CD8-positive, alpha-beta T cell (primary cell): ENCODE measurements at regions of chr14 and their contacts with region 1.

Region 1: DNA sequence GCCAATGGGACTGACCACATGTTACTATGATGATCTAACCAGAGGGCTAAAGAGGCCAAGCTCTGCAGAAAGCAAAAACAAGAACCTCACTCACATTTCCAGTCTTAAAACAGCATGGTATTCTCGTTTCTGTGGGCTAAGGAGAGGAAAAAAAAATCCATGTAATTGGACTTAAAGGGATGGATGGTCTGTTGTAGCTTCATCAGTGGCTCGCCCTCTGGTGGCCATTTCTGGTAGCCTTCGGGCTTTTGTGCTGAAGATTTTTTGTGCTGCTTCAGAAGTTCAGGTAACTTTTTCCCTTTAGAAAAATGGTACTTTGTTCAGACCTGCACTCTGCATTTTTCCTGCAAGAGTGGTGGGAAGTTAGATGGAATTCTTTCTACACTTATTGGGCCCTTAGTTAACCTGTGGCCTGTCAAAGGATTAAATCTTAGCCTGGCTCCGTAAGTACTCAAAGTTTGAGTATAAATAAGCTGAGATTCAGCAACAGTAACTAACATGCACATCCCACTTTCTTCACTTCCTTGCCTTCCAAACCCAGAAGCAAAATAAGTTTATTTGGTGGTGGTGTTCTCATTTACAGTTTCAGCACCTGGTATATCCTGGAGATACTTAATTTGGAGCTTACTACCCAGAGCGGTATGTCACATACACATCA is 22.3 kb downstream of the DCAF4 start:
- DNase-seq: peak; percentile 39 to 73 (median 60)
- ATAC-seq: peak; percentile 29
- H3K4me3 ChIP-seq: no peak overlapping the region
- H3K4me3 Mint-ChIP-seq: no peak overlapping the region
- H3K27ac ChIP-seq: no peak overlapping the region
- H3K27ac Mint-ChIP-seq: no peak overlapping the region
- H3K4me1 ChIP-seq: no peaks in the 10 kb centered on the region
- H3K4me1 Mint-ChIP-seq: no peaks in the 10 kb centered on the region
- H3K27me3 ChIP-seq: no peaks in the 10 kb centered on the region
- H3K27me3 Mint-ChIP-seq: no peaks in the 10 kb centered on the region
- CTCF ChIP-seq: peak; percentile 86

Region 2: DNA sequence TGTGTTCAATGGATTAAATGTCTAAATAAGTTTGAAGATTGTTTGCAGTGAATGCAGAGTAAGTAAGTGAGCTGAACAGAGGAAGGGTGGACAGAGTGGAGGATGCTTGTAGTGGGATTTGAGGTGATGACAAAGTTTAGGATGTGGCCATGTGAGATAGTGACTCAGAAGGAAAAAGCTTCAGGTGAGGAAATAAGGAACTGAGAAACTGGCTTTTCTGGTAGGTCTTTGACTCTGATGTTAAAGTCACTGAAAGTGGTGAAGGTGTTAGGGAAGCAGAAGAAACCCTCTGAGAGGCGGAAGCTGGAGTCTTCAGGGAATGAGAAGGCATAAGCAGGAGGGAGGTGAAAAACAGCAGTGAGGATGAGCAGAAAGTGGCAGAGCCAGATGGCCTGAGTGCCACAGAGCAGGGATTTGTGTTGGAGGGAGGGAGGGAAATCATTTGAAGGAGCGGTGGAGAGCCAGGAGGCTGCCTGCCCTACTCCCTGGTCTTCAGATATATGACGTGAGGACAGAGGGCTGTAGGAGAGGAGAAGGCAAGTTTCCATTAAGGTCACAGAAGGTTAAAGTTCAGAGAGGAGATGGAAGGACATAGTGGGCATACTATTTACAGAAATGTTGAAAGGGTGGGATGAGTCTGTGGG is 991.6 kb before region 1 on chr14:
- CTCF ChIA-PET with region 1: no interaction called
- POLR2A ChIA-PET with region 1: no interaction called
- intact Hi-C with region 1: no loop called
- DNase-seq: no peak
- ATAC-seq: no peak
- H3K4me3 ChIP-seq: no peak overlapping the region
- H3K4me3 Mint-ChIP-seq: no peak overlapping the region
- H3K27ac ChIP-seq: no peak overlapping the region
- H3K27ac Mint-ChIP-seq: no peak overlapping the region
- H3K4me1 ChIP-seq: no peaks in the 10 kb centered on the region
- H3K4me1 Mint-ChIP-seq: no peaks in the 10 kb centered on the region
- H3K27me3 ChIP-seq: no peaks in the 10 kb centered on the region
- H3K27me3 Mint-ChIP-seq: peaks cover 18% of the 10 kb centered on the region
- CTCF ChIP-seq: no peak

Region 3: GRCh38 chr14:72926292-72927028 is 22.1 kb before region 1 on chr14 and contains the start of gene DCAF4:
- CTCF ChIA-PET with region 1: interaction called, 6 read pairs
- POLR2A ChIA-PET with region 1: no interaction called
- intact Hi-C with region 1: loop called in 1 of 2 experiments (anchors 1 kb)
- DNase-seq: peak; percentile 89 to 97 (median 93)
- ATAC-seq: peak; percentile 93
- H3K4me3 ChIP-seq: peak within 1 kb of the TSS; percentile 79 to 87
- H3K4me3 Mint-ChIP-seq: peak within 1 kb of the TSS; percentile 94
- H3K27ac ChIP-seq: peak within 1 kb of the TSS; percentile 67 to 76
- H3K27ac Mint-ChIP-seq: peak within 1 kb of the TSS; percentile 92
- H3K4me1 ChIP-seq: peaks cover 13% of the 10 kb centered on the region
- H3K4me1 Mint-ChIP-seq: peaks cover 15% of the 10 kb centered on the region
- H3K27me3 ChIP-seq: no peaks in the 10 kb centered on the region
- H3K27me3 Mint-ChIP-seq: peaks cover 2% of the 10 kb centered on the region
- CTCF ChIP-seq: no peak
- total RNA-seq, gene DCAF4: 21.9 to 26.6 TPM

Region 4: GRCh38 chr14:72962829-72963312 is 14.3 kb after region 1 on chr14:
- CTCF ChIA-PET with region 1: interaction called, 51 read pairs
- POLR2A ChIA-PET with region 1: interaction called, 3 read pairs
- intact Hi-C with region 1: no loop called
- DNase-seq: no peak
- ATAC-seq: no peak
- H3K4me3 ChIP-seq: no peak overlapping the region
- H3K4me3 Mint-ChIP-seq: no peak overlapping the region
- H3K27ac ChIP-seq: no peak overlapping the region
- H3K27ac Mint-ChIP-seq: no peak overlapping the region
- H3K4me1 ChIP-seq: peaks cover 5% of the 10 kb centered on the region
- H3K4me1 Mint-ChIP-seq: no peaks in the 10 kb centered on the region
- H3K27me3 ChIP-seq: no peaks in the 10 kb centered on the region
- H3K27me3 Mint-ChIP-seq: no peaks in the 10 kb centered on the region
- CTCF ChIP-seq: no peak

Region 5: GRCh38 chr14:72975776-72976175 is 27.2 kb after region 1 on chr14:
- CTCF ChIA-PET with region 1: interaction called, 10 read pairs
- POLR2A ChIA-PET with region 1: no interaction called
- intact Hi-C with region 1: no loop called
- DNase-seq: no peak
- ATAC-seq: no peak
- H3K4me3 ChIP-seq: no peak overlapping the region
- H3K4me3 Mint-ChIP-seq: no peak overlapping the region
- H3K27ac ChIP-seq: no peak overlapping the region
- H3K27ac Mint-ChIP-seq: no peak overlapping the region
- H3K4me1 ChIP-seq: no peaks in the 10 kb centered on the region
- H3K4me1 Mint-ChIP-seq: no peaks in the 10 kb centered on the region
- H3K27me3 ChIP-seq: no peaks in the 10 kb centered on the region
- H3K27me3 Mint-ChIP-seq: no peaks in the 10 kb centered on the region
- CTCF ChIP-seq: no peak